ENCODE measurements at regions of chr9 and their contacts with region 1.

Region 1: DNA sequence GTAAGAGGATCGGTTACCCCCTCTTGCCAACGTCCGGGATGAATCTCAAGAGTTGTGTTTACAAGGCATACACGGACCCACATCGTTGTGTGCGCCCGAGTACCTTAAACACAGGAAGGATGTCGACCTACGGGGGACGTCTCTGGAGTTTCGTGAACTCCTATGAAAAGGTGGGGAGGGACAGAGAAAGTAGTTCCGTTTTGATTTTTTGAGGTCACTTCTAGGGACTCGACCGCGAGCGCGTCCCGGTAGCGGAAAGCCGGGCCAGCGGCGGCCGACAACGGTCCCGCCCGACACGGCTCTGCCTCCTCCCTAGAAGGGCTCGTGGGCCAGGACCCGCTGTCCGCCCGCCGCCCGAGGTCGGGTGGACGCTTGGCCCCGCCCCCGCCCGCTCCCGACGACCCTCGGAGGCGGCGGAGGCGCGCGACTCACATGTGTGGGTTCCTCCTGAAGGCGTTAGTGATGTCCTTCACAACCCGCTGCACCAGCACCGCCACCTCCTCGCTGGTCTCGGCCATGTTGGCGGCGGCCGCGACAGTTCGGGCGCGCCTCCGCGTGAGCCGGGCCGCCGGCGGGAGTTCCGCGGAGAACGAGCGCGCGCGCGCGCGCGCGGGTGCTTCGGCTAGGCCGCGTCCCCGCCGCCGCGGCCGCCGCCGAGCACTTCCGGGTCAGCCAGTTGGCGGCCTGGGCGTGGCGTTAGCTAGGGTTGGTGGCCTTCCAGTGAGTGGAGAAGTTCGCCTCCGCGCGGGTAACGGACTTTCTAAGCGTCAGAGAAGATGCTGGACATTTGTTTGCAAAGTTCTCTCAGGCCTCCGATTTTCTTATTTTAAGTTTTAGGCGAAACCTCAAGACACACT is at the start of gene PTAR1:
- DNase-seq: peak; percentile 88
- H3K4me3 Mint-ChIP-seq: peak within 1 kb of the TSS; percentile 91
- H3K27ac Mint-ChIP-seq: peak within 1 kb of the TSS; percentile 95
- H3K4me1 Mint-ChIP-seq: peaks cover 34% of the 10 kb centered on the region
- H3K27me3 Mint-ChIP-seq: peaks cover 5% of the 10 kb centered on the region
- total RNA-seq, gene PTAR1: 47.5 and 52.3 TPM in 2 replicates

Region 2: DNA sequence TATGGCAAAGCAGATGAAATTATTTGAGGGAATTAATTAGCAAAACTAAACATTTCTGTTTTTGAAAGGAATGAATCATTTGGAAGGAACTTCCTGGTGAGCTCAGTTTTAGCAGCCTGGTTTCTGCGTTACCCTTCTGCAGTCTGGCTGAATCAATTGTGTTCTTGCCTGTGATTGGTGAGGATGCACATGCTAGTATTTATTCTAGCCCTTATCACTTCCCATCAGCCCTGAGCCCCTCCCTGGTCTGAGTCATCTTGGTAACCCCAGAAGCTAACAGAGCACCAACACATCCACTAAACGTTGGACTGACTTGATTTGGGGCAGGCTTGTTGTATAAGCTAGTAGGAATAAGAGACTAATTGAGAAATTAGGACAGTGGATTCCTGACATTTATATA is 579.0 kb before region 1 on chr9:
- intact Hi-C with region 1: loop called (anchors 10 kb)
- DNase-seq: peak; percentile 47
- H3K4me3 Mint-ChIP-seq: peak overlapping the region; percentile 43
- H3K27ac Mint-ChIP-seq: peak overlapping the region; percentile 32
- H3K4me1 Mint-ChIP-seq: peaks cover 59% of the 10 kb centered on the region
- H3K27me3 Mint-ChIP-seq: peaks cover 6% of the 10 kb centered on the region

Region 3: GRCh38 chr9:69620731-69621130 is 138.9 kb before region 1 on chr9:
- intact Hi-C with region 1: no loop called
- DNase-seq: no peak
- H3K4me3 Mint-ChIP-seq: no peak overlapping the region
- H3K27ac Mint-ChIP-seq: no peak overlapping the region
- H3K4me1 Mint-ChIP-seq: no peaks in the 10 kb centered on the region
- H3K27me3 Mint-ChIP-seq: no peaks in the 10 kb centered on the region

Region 4: GRCh38 chr9:69672596-69673310 is 86.9 kb before region 1 on chr9:
- intact Hi-C with region 1: loop called (anchors 1 kb)
- DNase-seq: peak; percentile 65
- H3K4me3 Mint-ChIP-seq: peak overlapping the region; percentile 83
- H3K27ac Mint-ChIP-seq: peak overlapping the region; percentile 15
- H3K4me1 Mint-ChIP-seq: peaks cover 7% of the 10 kb centered on the region
- H3K27me3 Mint-ChIP-seq: peaks cover 42% of the 10 kb centered on the region

Region 5: DNA sequence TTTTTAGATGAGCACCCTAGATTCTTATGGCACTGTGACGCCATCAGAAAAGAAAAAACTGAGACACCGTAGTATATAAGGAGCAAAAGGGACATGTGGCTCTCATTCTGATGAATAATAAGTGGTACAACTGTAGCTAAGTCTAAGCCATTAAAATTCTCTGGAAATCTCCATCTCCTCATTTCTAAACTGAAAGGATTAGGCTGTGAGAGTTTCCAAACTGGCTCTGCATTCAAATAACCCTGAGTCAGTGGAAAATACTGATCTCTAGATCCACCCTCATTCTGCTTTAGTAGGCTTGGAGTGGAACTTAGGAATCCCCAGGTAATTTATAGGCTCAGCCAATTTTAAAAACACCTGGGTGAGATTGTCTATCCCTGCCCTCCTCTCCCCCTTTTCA is 28.3 kb before region 1 on chr9:
- intact Hi-C with region 1: loop called (anchors 1 kb)
- DNase-seq: no peak
- H3K4me3 Mint-ChIP-seq: no peak overlapping the region
- H3K27ac Mint-ChIP-seq: peak overlapping the region; percentile 57
- H3K4me1 Mint-ChIP-seq: peaks cover 24% of the 10 kb centered on the region
- H3K27me3 Mint-ChIP-seq: no peaks in the 10 kb centered on the region

Region 6: GRCh38 chr9:69834591-69835184 is 75.0 kb after region 1 on chr9:
- intact Hi-C with region 1: loop called (anchors 2 kb)
- DNase-seq: no peak
- H3K4me3 Mint-ChIP-seq: no peak overlapping the region
- H3K27ac Mint-ChIP-seq: no peak overlapping the region
- H3K4me1 Mint-ChIP-seq: peaks cover 52% of the 10 kb centered on the region
- H3K27me3 Mint-ChIP-seq: no peaks in the 10 kb centered on the region

Region 7: GRCh38 chr9:70258692-70259511 is 499.3 kb after region 1 on chr9 and contains the start of gene SMC5:
- intact Hi-C with region 1: loop called (anchors 1 kb)
- DNase-seq: peak; percentile 90
- H3K4me3 Mint-ChIP-seq: peak within 1 kb of the TSS; percentile 99
- H3K27ac Mint-ChIP-seq: peak within 1 kb of the TSS; percentile 95
- H3K4me1 Mint-ChIP-seq: peaks cover 49% of the 10 kb centered on the region
- H3K27me3 Mint-ChIP-seq: peaks cover 7% of the 10 kb centered on the region
- total RNA-seq, gene SMC5: 49.5 and 53.6 TPM in 2 replicates